ENCODE measurements at regions of chr5 and their contacts with region 1.

Region 1: GRCh38 chr5:74035521-74035981 is 409.6 kb downstream of the ARHGEF28 start:
- DNase-seq: peak in 1 of 2 donors; percentile 28
- H3K4me3 ChIP-seq: no peak overlapping the region
- H3K27ac ChIP-seq: no peak overlapping the region
- H3K4me1 ChIP-seq: no peaks in the 10 kb centered on the region
- H3K27me3 ChIP-seq: no peaks in the 10 kb centered on the region
- CTCF ChIP-seq: peak; percentile 22 to 23

Region 2: DNA sequence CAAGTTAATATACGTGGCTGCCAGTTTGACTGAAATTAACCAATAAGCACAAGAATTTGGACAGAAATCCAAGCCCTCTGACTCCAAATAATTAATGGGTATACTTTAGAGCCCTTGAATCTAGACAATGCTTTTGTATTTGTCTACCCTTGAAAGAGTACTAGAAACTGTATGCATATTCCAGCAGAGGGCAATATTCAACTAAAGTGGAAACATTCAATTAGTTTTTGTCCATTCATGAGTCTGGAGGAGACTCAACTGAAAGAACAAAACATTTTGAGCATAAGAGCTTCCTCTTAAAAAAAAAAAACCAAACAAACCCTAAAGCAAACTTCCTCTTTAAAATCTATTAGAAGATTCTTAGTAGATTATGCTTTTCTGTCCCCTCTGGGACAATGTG is 251.7 kb before region 1 on chr5:
- intact Hi-C with region 1: no loop called
- DNase-seq: no peak
- H3K4me3 ChIP-seq: no peak overlapping the region
- H3K27ac ChIP-seq: no peak overlapping the region
- H3K4me1 ChIP-seq: no peaks in the 10 kb centered on the region
- H3K27me3 ChIP-seq: no peaks in the 10 kb centered on the region
- CTCF ChIP-seq: no peak

Region 3: DNA sequence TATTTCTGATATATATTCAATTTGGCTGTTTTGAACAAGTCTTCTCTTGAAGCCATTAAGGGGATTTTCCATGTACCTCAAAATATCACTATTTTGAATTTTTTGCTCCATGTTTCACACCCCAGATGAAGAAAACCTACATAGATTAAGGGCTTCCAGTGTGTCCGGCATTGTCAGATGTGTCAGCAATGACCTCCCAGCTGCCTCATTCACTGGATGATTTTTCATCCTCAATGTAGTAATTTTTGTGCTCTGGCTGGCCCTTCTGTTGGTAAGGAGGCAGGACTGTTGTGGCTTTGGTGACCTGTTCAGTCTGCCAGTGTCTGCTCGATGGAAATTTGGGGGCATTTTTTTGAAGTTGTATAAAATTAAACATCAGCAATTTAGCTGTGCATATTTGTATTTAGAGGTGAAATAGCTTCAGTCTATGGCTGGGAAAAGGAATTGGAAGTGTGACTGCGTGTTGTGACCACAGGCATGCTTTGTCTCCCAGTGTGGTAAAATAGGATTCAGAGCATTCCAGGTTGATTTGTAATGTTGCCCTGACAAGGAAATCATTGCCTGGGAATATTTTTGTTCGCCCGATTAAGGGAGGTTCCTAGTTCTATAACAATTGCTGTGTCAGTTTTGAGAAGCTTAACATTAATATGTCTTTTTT is 97.1 kb before region 1 on chr5:
- intact Hi-C with region 1: no loop called
- DNase-seq: no peak
- H3K4me3 ChIP-seq: no peak overlapping the region
- H3K27ac ChIP-seq: peak overlapping the region in 1 of 2 donors; percentile 32
- H3K4me1 ChIP-seq: peaks cover 0 to 28% (median 6%) of the 10 kb centered on the region in 4 donors
- H3K27me3 ChIP-seq: no peaks in the 10 kb centered on the region
- CTCF ChIP-seq: no peak

Region 4: DNA sequence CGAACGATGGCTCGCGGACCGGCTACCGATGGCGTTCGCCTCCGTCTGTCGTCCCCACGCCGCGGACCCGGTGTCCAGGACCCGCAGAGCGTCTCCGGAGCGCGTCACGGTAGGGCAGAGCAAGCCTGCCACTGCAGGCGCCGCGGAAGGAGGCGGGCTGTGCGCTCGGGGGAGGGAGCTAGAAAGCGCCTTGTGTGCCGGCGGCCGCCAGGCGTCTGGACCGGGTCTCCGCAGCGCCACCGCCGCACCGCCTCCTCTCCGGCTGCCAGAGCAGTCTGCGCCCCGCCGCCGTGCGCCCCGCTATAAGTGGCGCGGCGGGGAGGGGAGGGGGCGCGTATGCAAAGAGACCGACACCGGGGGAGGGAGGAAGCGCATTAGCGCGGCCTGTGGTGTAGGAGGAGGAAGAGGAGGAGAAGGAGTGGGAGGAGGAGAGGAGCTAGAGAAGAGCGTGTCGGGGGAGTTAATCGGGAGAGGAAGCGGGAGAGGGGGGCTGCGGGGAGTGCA is 605.0 kb after region 1 on chr5 and contains the start of gene ENC1:
- intact Hi-C with region 1: loop called (anchors 10 kb)
- DNase-seq: peak; percentile 80 to 88
- H3K4me3 ChIP-seq: peak within 1 kb of the TSS; percentile 58 to 63
- H3K27ac ChIP-seq: peak within 1 kb of the TSS; percentile 50 to 63
- H3K4me1 ChIP-seq: peaks cover 0 to 33% (median 13%) of the 10 kb centered on the region in 4 donors
- H3K27me3 ChIP-seq: no peaks in the 10 kb centered on the region
- CTCF ChIP-seq: peak; percentile 58 to 59

Measured in tibial artery (tissue), 4 donors.